ENCODE measurements at regions of chr17 and their contacts with region 1.

Region 1: GRCh38 chr17:65785109-65785508 is 223.7 kb upstream of the AXIN2 start:
- DNase-seq: peak; percentile 8 to 91
- H3K4me3 ChIP-seq: no peak overlapping the region
- H3K27ac ChIP-seq: peak overlapping the region; percentile 77
- H3K4me1 ChIP-seq: peaks cover 31% of the 10 kb centered on the region
- H3K27me3 ChIP-seq: no peaks in the 10 kb centered on the region
- CTCF ChIP-seq: no peak

Region 2: GRCh38 chr17:65561394-65562205 is 223.5 kb before region 1 on chr17 and contains the start of gene AXIN2:
- CTCF ChIA-PET with region 1: no interaction called
- POLR2A ChIA-PET with region 1: no interaction called
- intact Hi-C with region 1: loop called (anchors 5 kb)
- DNase-seq: peak; percentile 72 to 80
- H3K4me3 ChIP-seq: peak within 1 kb of the TSS; percentile 70
- H3K27ac ChIP-seq: peak within 1 kb of the TSS; percentile 76
- H3K4me1 ChIP-seq: peaks cover 9% of the 10 kb centered on the region
- H3K27me3 ChIP-seq: no peaks in the 10 kb centered on the region
- CTCF ChIP-seq: peak; percentile 44; the same call in 1 of the 2 replicates
- total RNA-seq, gene AXIN2: 0.24 and 0.78 TPM in 2 replicates

Region 3: DNA sequence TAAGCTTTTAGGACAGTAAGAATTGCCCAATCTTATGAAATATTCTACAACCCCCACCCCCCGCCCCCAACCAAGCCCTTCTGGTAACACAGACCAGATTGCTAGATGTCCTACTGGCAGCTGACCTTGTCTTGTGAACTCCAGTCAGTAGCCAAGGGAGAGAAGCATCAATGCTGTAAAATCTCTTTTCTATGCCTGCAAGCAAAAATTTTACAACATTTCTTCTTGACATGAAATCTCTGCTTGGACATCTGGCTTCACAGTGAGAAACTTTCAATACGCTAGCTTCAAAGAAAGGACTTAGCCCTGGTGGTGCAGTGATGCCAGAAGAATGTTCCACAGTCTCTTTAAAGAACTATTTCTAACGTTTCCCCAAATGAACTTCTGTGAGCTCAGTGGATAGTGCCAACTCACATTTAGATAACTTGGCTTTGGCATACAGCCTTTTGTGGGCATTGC is 54.4 kb before region 1 on chr17:
- CTCF ChIA-PET with region 1: no interaction called
- POLR2A ChIA-PET with region 1: no interaction called
- intact Hi-C with region 1: no loop called
- DNase-seq: no peak
- H3K4me3 ChIP-seq: no peak overlapping the region
- H3K27ac ChIP-seq: no peak overlapping the region
- H3K4me1 ChIP-seq: no peaks in the 10 kb centered on the region
- H3K27me3 ChIP-seq: no peaks in the 10 kb centered on the region
- CTCF ChIP-seq: no peak

Region 4: DNA sequence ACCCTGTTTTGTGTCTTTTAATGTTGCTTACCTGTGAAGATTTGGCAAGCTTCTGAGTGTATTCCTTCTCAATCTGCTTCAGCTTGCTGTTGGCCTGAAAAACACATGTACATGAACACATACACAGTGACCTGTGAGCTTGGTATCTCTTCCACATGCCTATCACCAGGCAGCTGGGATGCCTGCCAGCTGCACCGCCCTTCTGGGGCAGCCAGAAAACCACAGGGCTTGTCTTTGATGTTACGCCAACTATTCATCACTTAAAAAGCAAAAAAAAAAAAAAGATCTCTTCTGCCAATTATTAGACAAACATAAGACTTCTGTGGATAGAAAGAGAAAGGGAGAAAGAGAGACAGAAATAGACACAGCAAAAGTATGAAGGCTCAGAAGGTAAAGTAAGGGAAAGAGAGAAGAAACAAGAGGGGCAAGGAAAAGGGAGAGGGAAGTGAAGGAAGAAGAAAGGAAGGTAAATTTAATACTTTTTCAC is 34.4 kb before region 1 on chr17:
- CTCF ChIA-PET with region 1: no interaction called
- POLR2A ChIA-PET with region 1: no interaction called
- intact Hi-C with region 1: loop called (anchors 1 kb)
- DNase-seq: peak; percentile 82 to 89
- H3K4me3 ChIP-seq: no peak overlapping the region
- H3K27ac ChIP-seq: no peak overlapping the region
- H3K4me1 ChIP-seq: peaks cover 29% of the 10 kb centered on the region
- H3K27me3 ChIP-seq: no peaks in the 10 kb centered on the region
- CTCF ChIP-seq: no peak